Upper lobe of right lung (tissue), 1 donor: ENCODE measurements at regions of chr3 and their contacts with region 1.

Region 1: DNA sequence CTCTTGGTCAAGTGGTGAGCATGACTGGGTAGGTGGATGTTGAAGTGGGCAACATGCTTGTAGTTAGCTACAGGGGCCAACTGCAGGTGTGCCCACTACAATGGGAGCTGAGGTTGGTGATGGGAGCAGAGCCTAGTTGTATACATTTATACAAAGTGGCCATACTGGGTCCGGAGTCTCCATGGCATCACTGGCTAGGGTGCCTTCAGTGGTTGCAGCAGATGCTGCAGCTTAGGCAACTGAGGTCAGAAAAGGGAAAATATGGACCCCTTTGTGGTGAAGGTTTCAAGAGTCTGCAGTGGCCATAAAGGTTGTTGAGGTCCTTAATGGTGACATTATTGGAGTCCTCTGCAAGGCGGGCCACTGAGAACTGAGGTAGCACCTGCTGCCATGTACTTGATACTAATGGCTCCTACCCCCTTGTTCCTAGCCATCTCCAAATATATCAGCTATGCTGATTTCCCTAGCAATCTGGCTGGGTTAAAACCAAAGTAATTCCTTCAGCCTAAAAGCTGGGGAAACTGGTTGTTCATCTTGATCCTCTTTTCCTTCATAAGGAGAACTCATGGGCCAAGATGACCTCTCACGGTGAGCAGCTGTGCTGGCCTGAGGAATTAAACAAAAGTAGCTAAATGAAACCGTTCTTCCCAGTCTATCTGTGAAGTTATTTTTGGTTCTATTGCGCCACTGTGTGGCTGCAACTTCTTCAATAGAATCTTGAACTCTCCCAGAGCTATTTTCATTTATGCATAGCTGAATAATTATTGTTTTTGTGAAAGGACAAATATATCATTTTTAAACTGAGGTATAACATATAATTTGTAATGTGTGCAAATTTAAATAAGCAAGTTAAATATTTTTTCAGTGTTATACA is 76.0 kb upstream of the PLSCR4 start:
- DNase-seq: no peak
- ATAC-seq: peak; percentile 77
- H3K4me3 ChIP-seq: no peak overlapping the region
- H3K27ac ChIP-seq: no peak overlapping the region
- H3K4me1 ChIP-seq: no peaks in the 10 kb centered on the region
- H3K27me3 ChIP-seq: no peaks in the 10 kb centered on the region
- CTCF ChIP-seq: peak; percentile 54

Region 2: DNA sequence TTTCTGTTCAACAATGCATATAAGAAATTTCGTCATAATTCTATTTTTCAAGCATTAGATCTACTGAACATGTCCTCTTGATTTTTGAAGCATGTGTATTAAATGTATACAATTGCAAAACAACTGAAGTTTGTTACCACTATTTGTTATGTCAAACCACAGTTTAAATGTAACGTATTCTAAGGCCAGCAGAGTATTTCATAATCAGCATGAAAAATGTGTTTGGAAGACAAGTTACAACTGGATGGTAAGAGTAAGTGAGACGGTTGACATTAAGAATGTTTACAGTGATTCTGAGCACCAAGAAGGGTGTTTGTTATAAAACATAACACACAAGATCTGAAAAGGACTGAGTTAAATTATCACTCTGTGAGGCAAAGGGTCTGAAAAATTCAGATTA is 904.4 kb before region 1 on chr3:
- intact Hi-C with region 1: no loop called
- DNase-seq: no peak
- ATAC-seq: no peak
- H3K4me3 ChIP-seq: no peak overlapping the region
- H3K27ac ChIP-seq: no peak overlapping the region
- H3K4me1 ChIP-seq: no peaks in the 10 kb centered on the region
- H3K27me3 ChIP-seq: no peaks in the 10 kb centered on the region
- CTCF ChIP-seq: no peak

Region 3: DNA sequence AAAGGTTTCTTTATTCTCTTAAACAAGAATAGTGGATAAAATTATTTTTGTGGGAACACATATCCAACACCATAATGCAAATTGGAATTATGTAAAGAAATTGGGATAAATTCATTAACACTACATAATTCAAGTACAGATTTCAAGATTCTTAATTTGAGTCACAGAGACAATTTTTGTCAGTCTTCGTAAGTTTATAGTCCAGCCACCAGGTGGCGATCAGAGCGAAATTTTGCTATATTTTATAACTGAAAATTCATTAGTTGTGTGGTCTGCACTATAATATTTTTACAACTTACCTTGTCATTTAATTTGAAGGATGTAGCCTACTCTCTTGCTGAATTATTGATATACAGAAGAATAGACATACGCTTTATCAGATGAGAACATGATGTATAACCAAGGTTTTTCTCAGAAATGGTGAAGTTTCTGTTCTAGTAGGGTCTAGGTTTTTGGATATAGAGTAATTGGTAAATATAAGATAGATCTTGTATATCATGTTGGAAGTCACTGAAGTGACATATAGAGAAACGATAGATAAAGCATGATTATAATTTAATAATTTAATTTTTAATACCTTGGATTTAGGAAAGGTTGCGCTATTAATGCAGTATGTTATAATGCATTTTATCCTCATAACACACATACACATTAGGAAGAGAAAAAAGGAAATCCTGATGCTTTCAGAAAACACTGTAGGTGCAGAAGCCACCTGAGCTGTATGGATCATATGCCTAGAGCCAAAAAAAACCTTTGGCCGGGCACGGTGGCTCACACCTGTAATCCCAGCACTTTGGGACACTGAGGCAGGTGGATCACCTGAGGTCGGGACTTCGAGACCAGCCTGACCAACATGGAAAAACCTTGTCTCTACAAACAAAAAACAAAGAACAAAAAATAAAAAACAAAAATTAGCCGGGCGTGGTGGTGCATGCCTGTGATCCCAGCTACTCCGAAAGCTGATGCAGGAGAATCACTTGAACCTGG is 107.7 kb before region 1 on chr3:
- intact Hi-C with region 1: loop called (anchors 10 kb)
- DNase-seq: no peak
- ATAC-seq: no peak
- H3K4me3 ChIP-seq: no peak overlapping the region
- H3K27ac ChIP-seq: no peak overlapping the region
- H3K4me1 ChIP-seq: no peaks in the 10 kb centered on the region
- H3K27me3 ChIP-seq: no peaks in the 10 kb centered on the region
- CTCF ChIP-seq: peak; percentile 82

Region 4: DNA sequence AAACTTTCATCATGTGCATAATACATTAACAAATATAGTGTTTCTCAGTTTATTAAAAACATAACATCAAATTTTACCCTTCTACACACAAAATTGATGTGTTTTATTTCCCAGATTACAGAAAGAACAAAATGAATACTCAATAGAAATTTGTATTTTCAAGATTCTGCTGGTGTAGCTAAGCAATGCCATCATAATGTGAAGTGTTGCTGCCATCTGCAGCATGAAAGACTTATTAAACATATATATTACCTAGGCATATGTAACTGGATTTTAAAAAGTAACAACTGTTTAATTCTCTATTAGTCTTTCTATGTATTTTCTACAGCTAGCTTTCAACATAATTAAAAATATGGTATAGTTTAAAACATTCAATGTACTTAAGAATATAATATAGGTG is 250.8 kb after region 1 on chr3:
- intact Hi-C with region 1: loop called (anchors 10 kb)
- DNase-seq: no peak
- ATAC-seq: peak; percentile 69
- H3K4me3 ChIP-seq: no peak overlapping the region
- H3K27ac ChIP-seq: no peak overlapping the region
- H3K4me1 ChIP-seq: no peaks in the 10 kb centered on the region
- H3K27me3 ChIP-seq: no peaks in the 10 kb centered on the region
- CTCF ChIP-seq: peak; percentile 52